Activated CD4-positive, alpha-beta memory T cell treated with anti-CD3 and anti-CD28 coated beads for 36 hours (primary cell): ENCODE measurements at regions of chr19 and their contacts with region 1.

Region 1: GRCh38 chr19:52028027-52028779 is at the start of gene ZNF614:
- DNase-seq: peak; percentile 92
- H3K4me3 Mint-ChIP-seq: peak within 1 kb of the TSS; percentile 83
- H3K27ac Mint-ChIP-seq: peak within 1 kb of the TSS; percentile 87
- H3K4me1 Mint-ChIP-seq: peaks cover 10% of the 10 kb centered on the region
- H3K27me3 Mint-ChIP-seq: no peaks in the 10 kb centered on the region
- total RNA-seq, gene ZNF614: 7.2 TPM

Region 2: GRCh38 chr19:51904331-51905165 is 123.7 kb before region 1 on chr19 and contains the start of gene ZNF649:
- CTCF ChIA-PET with region 1: no interaction called
- POLR2A ChIA-PET with region 1: no interaction called
- intact Hi-C with region 1: loop called (anchors 5 kb)
- DNase-seq: peak; percentile 88
- H3K4me3 Mint-ChIP-seq: peak within 1 kb of the TSS; percentile 99
- H3K27ac Mint-ChIP-seq: peak within 1 kb of the TSS; percentile 97
- H3K4me1 Mint-ChIP-seq: peaks cover 22% of the 10 kb centered on the region
- H3K27me3 Mint-ChIP-seq: peaks cover 16% of the 10 kb centered on the region
- total RNA-seq, gene ZNF649: 6.7 to 9.0 TPM

Region 3: GRCh38 chr19:51926784-51927742 is 101.1 kb before region 1 on chr19 and contains the start of gene ZNF613:
- CTCF ChIA-PET with region 1: no interaction called
- POLR2A ChIA-PET with region 1: no interaction called
- intact Hi-C with region 1: loop called (anchors 5 kb)
- DNase-seq: peak; percentile 90
- H3K4me3 Mint-ChIP-seq: peak within 1 kb of the TSS; percentile 92
- H3K27ac Mint-ChIP-seq: peak within 1 kb of the TSS; percentile 97
- H3K4me1 Mint-ChIP-seq: peaks cover 20% of the 10 kb centered on the region
- H3K27me3 Mint-ChIP-seq: no peaks in the 10 kb centered on the region
- total RNA-seq, gene ZNF613: 3.2 to 4.6 TPM

Region 4: GRCh38 chr19:51938936-51939335 is 89.3 kb before region 1 on chr19:
- CTCF ChIA-PET with region 1: no interaction called
- POLR2A ChIA-PET with region 1: no interaction called
- intact Hi-C with region 1: no loop called
- DNase-seq: no peak
- H3K4me3 Mint-ChIP-seq: no peak overlapping the region
- H3K27ac Mint-ChIP-seq: no peak overlapping the region
- H3K4me1 Mint-ChIP-seq: no peaks in the 10 kb centered on the region
- H3K27me3 Mint-ChIP-seq: no peaks in the 10 kb centered on the region

Region 5: GRCh38 chr19:51986309-51987291 is 41.6 kb before region 1 on chr19 and contains the start of gene ZNF350:
- CTCF ChIA-PET with region 1: no interaction called
- POLR2A ChIA-PET with region 1: no interaction called
- intact Hi-C with region 1: loop called (anchors 1 kb)
- DNase-seq: peak; percentile 94
- H3K4me3 Mint-ChIP-seq: peak within 1 kb of the TSS; percentile 89
- H3K27ac Mint-ChIP-seq: peak within 1 kb of the TSS; percentile 87
- H3K4me1 Mint-ChIP-seq: peaks cover 12% of the 10 kb centered on the region
- H3K27me3 Mint-ChIP-seq: no peaks in the 10 kb centered on the region
- total RNA-seq, gene ZNF350: 6.9 to 8.1 TPM

Region 6: DNA sequence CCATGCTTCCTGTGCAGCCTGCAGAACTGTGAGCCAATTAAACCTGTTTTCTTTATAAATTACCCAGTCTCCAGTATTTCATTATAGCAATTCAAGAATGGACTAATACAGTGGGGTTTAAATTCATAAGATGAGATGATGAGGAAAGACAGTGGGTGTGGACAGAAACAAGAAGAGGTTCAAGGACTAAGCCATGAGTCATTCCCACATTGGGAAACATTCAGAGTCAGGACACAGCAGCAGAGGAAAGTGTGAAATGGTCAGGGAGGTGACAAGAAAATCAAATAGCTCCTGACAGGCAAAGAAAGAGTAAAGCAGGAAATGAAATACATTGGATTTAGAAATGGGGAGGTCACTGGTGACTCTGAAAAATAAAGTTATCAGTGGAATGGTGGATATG is 58.3 kb after region 1 on chr19:
- CTCF ChIA-PET with region 1: no interaction called
- POLR2A ChIA-PET with region 1: no interaction called
- intact Hi-C with region 1: no loop called
- DNase-seq: no peak
- H3K4me3 Mint-ChIP-seq: no peak overlapping the region
- H3K27ac Mint-ChIP-seq: no peak overlapping the region
- H3K4me1 Mint-ChIP-seq: peaks cover 2% of the 10 kb centered on the region
- H3K27me3 Mint-ChIP-seq: no peaks in the 10 kb centered on the region